Left cardiac atrium (tissue), 4 donors: ENCODE measurements at regions of chr1 and their contacts with region 1.

Region 1: GRCh38 chr1:230772457-230773395 is 25.5 kb downstream of the CAPN9 start:
- DNase-seq: peak; percentile 69
- ATAC-seq: peak; percentile 89 to 92

Region 2: GRCh38 chr1:230642263-230642959 is 130.3 kb before region 1 on chr1 and contains the start of gene COG2:
- intact Hi-C with region 1: loop called (anchors 5 kb)
- DNase-seq: peak; percentile 97
- ATAC-seq: peak; percentile 99
- total RNA-seq, gene COG2: 30.5 to 31.2 TPM

Region 3: GRCh38 chr1:230681599-230681998 is 91.1 kb before region 1 on chr1:
- intact Hi-C with region 1: no loop called
- DNase-seq: no peak
- ATAC-seq: peak; percentile 85 to 90

Region 4: GRCh38 chr1:230713915-230714764 is 58.6 kb before region 1 on chr1 and contains the start of gene AGT:
- intact Hi-C with region 1: loop called in 1 of 2 experiments (anchors 2 kb)
- DNase-seq: peak; percentile 79
- ATAC-seq: peak; percentile 94 to 95
- total RNA-seq, gene AGT: 102 to 130 TPM

Region 5: DNA sequence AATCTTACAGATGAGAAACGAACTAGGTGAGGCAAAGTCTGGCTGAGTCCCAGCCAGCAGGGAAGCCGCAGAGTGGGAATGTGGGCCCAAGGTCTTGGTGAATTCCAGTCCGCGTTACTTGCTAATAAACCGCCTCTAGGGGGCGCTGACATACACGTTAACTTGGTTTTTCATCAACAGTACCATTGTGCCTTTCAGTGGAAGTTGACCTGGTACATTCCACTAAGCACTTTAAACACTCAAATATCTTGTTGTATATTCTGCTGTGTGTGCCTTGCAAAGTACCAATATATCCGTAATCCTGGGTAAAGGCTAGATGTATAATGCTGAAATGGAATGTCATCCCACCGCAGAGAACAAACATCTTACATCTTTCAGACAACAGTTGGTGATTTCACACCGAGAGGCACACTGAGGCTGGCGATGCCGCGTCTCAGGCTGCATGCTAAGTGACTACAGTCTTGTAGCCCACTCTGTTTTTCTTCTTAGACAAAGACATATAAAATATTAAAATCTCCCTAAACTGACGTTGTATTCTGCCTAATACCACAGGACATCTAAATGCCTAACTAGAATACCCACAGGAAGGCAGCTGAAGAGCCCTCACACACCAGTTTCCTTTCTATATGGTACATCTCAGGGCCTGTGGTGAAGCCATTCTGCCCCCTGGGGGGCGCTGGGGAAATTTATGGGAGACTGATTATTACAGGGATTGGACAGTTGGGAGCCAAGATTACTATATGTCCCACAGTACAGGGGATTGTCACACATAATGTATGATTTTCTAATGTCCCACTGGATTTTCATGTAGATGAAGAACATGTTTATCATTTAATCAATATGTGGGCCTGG is 144.8 kb after region 1 on chr1:
- intact Hi-C with region 1: no loop called
- DNase-seq: peak; percentile 78
- ATAC-seq: peak; percentile 84 to 87

Region 6: GRCh38 chr1:231395076-231395995 is 622.6 kb after region 1 on chr1:
- intact Hi-C with region 1: no loop called
- DNase-seq: no peak
- ATAC-seq: peak; percentile 77 to 92